ENCODE measurements at regions of chr10 and their contacts with region 1.

Region 1: GRCh38 chr10:28393966-28394568 is 91.2 kb upstream of the MPP7 start:
- DNase-seq: peak; percentile 76
- H3K4me3 Mint-ChIP-seq: no peak overlapping the region
- H3K27ac Mint-ChIP-seq: no peak overlapping the region
- H3K4me1 Mint-ChIP-seq: peaks cover 3% of the 10 kb centered on the region
- H3K27me3 Mint-ChIP-seq: no peaks in the 10 kb centered on the region

Region 2: DNA sequence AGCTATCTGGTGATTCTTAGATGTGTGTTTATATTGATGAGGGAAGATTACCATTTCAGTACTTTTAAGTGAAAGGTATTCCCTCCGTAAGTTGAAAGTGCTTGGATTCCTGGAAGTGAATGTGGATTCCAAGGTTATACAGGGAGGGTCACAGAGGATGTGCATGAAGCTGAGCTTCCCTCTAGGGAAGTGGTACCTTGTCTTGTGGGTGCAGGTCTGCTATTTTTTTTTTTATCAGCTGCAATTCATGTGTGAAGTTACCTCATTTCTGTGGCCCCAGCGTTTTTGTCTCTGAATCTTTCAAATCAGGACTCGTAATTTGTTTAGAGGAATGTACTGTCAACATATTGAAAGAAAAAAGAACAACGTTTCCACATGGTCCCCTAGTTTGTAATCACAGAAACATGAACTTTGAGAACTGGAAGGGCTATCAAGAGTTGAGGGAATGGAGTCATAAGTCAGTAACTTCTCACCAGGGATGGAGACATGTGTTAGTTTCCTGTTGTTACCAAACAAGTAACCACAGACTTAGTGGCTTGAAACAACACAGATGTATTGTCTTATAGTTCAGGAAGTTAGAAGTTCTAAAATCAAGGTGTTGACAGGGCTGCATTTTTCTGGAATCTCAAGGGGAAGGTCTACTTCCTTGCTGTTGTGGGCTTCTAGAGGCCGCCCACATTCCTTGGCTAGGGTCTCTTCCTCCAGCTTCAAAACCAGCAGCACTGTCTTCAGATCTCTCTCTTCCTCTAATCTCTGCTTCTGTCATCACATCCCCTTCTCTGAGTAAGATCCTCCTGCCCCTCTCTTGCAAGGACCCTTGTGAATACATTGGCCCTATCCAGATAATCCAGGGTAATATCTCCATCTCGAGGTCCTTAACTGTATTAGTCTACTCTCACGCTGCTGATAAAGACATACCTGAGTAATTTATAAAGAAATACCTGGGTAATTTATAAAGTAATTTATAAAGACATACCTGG is 825.6 kb before region 1 on chr10:
- CTCF ChIA-PET with region 1: interaction called, 3 read pairs
- POLR2A ChIA-PET with region 1: no interaction called
- intact Hi-C with region 1: loop called (anchors 10 kb)
- DNase-seq: no peak
- H3K4me3 Mint-ChIP-seq: no peak overlapping the region
- H3K27ac Mint-ChIP-seq: peak overlapping the region; percentile 53
- H3K4me1 Mint-ChIP-seq: peaks cover 28% of the 10 kb centered on the region
- H3K27me3 Mint-ChIP-seq: no peaks in the 10 kb centered on the region

Region 3: DNA sequence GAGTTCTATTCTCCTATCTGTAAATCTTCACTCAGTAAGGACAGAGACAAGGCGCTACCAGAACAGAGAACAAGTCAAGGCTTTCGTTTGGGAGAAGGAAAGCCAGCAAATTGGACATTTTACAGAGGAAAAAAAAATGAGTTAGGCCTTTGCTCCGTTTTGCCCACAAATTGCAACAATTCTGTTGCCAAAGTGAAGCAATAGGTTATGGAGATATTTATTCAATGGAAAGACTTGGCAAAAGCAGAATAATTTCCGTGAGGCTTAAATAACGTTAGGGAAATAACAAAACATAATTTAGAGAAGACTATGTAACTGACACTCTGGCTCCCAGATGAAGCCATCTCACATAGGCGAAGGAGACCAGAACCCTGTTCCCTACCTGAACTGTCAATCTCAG is 715.9 kb before region 1 on chr10:
- CTCF ChIA-PET with region 1: no interaction called
- POLR2A ChIA-PET with region 1: no interaction called
- intact Hi-C with region 1: no loop called
- DNase-seq: no peak
- H3K4me3 Mint-ChIP-seq: no peak overlapping the region
- H3K27ac Mint-ChIP-seq: no peak overlapping the region
- H3K4me1 Mint-ChIP-seq: no peaks in the 10 kb centered on the region
- H3K27me3 Mint-ChIP-seq: peaks cover 2% of the 10 kb centered on the region

Region 4: DNA sequence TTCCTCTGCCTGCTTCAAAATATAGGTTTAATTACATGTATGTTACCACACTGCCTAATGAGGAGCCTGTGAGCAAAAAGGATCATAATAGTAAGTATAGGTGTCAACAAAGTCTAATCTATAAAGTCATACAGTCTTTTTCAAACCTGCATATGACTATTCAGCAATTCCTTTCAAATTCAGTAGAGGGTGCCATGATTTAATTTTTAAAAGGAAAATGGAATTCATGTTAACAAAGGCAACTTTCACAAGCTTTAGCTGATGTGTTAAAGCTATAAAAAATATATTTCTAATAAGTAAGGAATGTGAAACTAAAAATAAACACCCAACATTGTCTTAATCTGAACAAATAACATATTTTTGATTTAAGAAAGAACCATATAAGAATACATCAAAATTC is 143.3 kb before region 1 on chr10:
- CTCF ChIA-PET with region 1: interaction called, 39 read pairs
- POLR2A ChIA-PET with region 1: no interaction called
- intact Hi-C with region 1: no loop called
- DNase-seq: no peak
- H3K4me3 Mint-ChIP-seq: no peak overlapping the region
- H3K27ac Mint-ChIP-seq: no peak overlapping the region
- H3K4me1 Mint-ChIP-seq: peaks cover 6% of the 10 kb centered on the region
- H3K27me3 Mint-ChIP-seq: no peaks in the 10 kb centered on the region

Region 5: DNA sequence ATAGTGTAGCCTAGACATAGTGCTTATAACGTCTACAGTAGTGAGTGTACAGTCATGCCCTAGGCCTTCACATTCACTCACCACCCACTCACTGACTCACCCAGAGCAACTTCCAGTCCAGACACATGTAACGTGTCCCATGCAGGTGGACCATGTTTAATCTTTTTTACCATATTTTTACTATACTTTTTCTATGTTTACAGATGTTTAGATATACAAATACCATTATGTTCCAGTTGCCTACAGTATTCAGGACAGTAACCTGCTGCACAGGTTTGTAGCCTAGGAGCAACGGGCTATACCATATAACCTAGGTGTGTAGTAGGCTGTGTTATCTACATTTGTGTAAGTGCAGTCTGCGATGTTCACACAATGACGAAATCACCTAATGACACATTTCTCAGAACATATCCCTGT is 102.2 kb before region 1 on chr10:
- CTCF ChIA-PET with region 1: interaction called, 15 read pairs
- POLR2A ChIA-PET with region 1: no interaction called
- intact Hi-C with region 1: no loop called
- DNase-seq: peak; percentile 77
- H3K4me3 Mint-ChIP-seq: no peak overlapping the region
- H3K27ac Mint-ChIP-seq: peak overlapping the region; percentile 7
- H3K4me1 Mint-ChIP-seq: peaks cover 43% of the 10 kb centered on the region
- H3K27me3 Mint-ChIP-seq: no peaks in the 10 kb centered on the region

Region 6: GRCh38 chr10:28381903-28382347 is 12.1 kb before region 1 on chr10:
- CTCF ChIA-PET with region 1: interaction called, 49 read pairs
- POLR2A ChIA-PET with region 1: no interaction called
- intact Hi-C with region 1: no loop called
- DNase-seq: peak; percentile 89
- H3K4me3 Mint-ChIP-seq: no peak overlapping the region
- H3K27ac Mint-ChIP-seq: no peak overlapping the region
- H3K4me1 Mint-ChIP-seq: peaks cover 28% of the 10 kb centered on the region
- H3K27me3 Mint-ChIP-seq: no peaks in the 10 kb centered on the region

Region 7: DNA sequence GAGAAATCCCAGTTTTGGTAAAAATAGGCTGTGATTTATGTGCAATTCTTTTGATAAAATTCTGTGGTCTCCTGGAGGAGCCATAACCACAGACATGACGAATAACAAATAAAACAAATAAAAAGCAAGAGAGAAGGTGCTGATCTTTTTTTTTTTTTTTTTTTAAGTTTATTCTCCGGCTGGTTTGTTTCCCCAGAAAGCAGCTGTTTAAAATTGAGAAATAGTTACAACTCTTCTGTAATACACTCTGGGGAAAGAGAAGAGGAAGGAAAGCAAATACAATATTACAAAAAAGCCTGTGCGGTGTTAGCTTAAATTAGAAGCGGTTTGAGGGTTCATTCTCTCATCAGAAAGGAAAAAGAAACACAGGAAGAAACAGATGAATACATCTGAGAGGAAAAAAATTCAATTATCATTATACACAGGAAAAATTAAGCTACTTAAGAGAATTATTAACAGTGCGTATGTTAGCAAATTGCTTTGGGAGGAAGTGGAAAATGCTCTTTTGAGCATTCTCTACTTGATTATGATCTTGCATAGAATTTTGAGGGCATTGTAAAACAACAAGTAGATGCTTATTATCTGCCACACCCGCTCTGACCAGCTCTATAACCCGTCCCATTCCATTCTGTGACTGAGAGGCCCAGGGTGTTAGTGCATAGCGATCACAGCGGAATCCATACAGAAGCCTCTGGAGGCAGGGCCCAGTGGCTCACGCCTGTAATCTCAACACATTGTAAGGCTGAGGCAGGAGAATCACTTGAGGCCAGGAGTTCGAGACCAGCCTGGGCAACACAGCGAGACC is 98.3 kb after region 1 on chr10:
- CTCF ChIA-PET with region 1: no interaction called
- POLR2A ChIA-PET with region 1: no interaction called
- intact Hi-C with region 1: no loop called
- DNase-seq: no peak
- H3K4me3 Mint-ChIP-seq: no peak overlapping the region
- H3K27ac Mint-ChIP-seq: no peak overlapping the region
- H3K4me1 Mint-ChIP-seq: no peaks in the 10 kb centered on the region
- H3K27me3 Mint-ChIP-seq: peaks cover 6% of the 10 kb centered on the region

Region 8: GRCh38 chr10:28520346-28520745 is 126.3 kb after region 1 on chr10:
- CTCF ChIA-PET with region 1: no interaction called
- POLR2A ChIA-PET with region 1: no interaction called
- intact Hi-C with region 1: no loop called
- DNase-seq: no peak
- H3K4me3 Mint-ChIP-seq: no peak overlapping the region
- H3K27ac Mint-ChIP-seq: no peak overlapping the region
- H3K4me1 Mint-ChIP-seq: no peaks in the 10 kb centered on the region
- H3K27me3 Mint-ChIP-seq: no peaks in the 10 kb centered on the region

Measured in activated CD4-positive, alpha-beta memory T cell treated with anti-CD3 and anti-CD28 coated beads for 36 hours (primary cell).